ENCODE measurements at regions of chr13 and their contacts with region 1.

Region 1: GRCh38 chr13:97474349-97474980 is 40.5 kb downstream of the RAP2A start:
- DNase-seq: no peak

Region 2: DNA sequence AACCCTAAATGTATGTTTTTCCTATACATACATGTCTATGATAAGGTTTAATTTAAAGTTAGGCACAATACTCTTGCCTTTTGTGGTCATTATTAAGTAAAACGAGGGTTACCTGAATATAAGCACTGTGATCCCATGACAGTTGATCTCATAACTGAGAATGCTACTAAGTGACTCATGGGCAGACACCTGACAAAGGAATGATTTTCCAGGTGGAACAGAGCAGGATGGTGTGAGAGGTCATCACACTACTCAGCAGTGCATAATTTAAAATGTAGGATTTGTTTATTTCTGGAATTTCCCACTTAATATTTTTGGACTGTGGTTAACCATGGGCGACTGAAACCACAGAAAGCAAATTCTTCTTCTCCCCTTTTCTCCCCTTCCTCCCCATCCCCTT is 1600.2 kb before region 1 on chr13:
- intact Hi-C with region 1: loop called in 1 of 2 experiments (anchors 5 kb)
- DNase-seq: no peak

Region 3: GRCh38 chr13:96822895-96823294 is 651.6 kb before region 1 on chr13:
- intact Hi-C with region 1: loop called in 1 of 2 experiments (anchors 5 kb)
- DNase-seq: no peak

Measured in posterior vena cava (tissue), 2 donors.